ENCODE measurements at regions of chr2 and their contacts with region 1.

Region 1: DNA sequence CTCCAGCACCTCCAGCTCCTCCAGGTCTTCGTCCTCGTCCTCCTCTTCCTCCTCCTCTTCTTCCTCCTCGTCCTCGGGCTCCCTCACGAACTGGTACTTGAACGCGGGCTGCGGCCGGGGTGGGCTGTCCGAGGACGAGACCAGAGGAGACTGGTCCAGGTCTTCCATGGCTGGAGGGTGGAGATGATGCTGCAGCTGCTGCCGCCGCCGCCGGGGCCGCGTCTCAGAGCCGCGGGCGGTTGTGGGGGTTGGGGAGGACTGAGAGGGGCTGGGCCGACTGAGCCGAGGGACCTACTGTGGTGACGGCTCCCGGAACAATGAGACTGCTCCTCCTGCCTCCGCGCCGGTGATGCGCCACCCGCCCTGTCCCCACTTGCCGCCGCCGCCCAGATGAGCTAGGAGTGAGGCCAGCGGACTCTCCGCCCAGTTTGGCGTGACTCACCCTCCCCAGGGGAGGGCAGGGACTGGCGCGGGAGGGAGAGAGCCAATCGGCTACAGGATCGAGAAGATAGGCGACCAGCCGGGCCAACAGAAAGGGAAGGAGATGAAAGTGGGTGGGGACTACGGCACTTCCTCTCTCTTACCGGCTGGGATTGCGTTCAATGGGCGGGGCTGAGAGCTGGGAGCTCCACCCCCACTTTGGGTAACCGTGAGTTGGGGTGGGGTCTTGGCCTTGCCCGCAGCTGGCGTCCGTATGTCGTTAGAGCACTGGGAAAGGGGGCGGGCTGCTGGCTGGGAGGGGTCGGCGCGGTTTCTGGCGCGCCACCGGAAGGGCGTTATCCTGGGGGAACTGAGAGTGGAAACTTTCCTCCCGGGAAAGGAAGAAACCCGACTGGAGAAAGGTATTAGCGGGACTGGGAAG is at the start of gene RTN4:
- DNase-seq: peak; percentile 98 to 99 (median 99)
- H3K4me3 ChIP-seq: peak within 1 kb of the TSS; percentile 88 to 93
- H3K4me3 Mint-ChIP-seq: peak within 1 kb of the TSS; percentile 94 to 100 (median 100)
- H3K27ac ChIP-seq: peak within 1 kb of the TSS; percentile 87
- H3K27ac Mint-ChIP-seq: peak within 1 kb of the TSS; percentile 93 to 100 (median 99)
- H3K4me1 ChIP-seq: peaks cover 70% of the 10 kb centered on the region
- H3K4me1 Mint-ChIP-seq: peaks cover 51 to 82% (median 60%) of the 10 kb centered on the region in 4 donors
- H3K27me3 ChIP-seq: no peaks in the 10 kb centered on the region
- H3K27me3 Mint-ChIP-seq: no peaks in the 10 kb centered on the region
- total RNA-seq, gene RTN4: 73.8 to 81.3 TPM

Region 2: DNA sequence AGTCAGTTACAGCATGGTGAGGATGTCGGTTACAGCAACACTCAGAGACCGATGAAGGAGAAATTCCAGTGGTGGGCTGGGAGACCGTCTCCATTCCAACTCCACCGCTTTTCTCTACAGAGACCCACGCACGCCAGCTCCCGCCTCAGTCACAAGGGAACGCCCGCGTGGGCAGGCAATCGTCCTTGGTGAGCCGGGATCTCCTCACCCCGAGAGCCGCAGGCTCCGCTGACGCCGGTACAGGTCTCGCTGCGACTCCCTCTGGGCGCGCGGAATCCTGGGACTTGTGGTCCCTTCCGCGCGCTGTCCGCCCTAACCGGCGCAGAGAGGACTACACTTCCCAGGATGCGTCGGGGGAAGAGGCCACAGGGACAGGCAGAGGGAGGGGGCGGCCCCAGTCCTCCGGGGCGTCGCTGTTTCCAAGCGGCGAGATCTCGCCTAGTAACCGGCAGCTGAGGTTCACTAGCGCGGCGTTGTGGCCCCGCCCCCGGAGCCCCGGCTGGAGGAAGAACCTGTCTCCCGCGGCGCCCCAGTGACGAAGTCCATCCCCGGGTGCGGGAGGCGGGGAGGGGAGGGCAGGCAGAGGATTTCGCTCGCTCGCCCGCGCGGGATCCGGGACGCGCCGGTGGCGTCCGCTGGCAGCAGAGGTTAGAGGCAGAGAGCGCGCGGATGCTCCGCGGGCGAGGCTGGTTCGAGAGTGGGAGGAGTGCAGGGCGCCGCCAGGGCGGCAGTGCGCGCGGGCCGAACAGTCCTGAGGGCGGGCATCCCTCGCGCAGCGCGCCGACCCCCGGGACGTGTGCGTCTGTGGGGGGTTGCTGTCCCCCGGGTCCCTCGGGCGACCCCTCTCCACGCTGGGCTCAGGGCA is 327.0 kb before region 1 on chr2 and contains the start of gene EML6:
- CTCF ChIA-PET with region 1: no interaction called
- POLR2A ChIA-PET with region 1: no interaction called
- intact Hi-C with region 1: loop called (anchors 1 kb)
- DNase-seq: peak; percentile 98 to 100 (median 98)
- H3K4me3 ChIP-seq: peak within 1 kb of the TSS; percentile 61 to 79
- H3K4me3 Mint-ChIP-seq: peak within 1 kb of the TSS; percentile 93 to 97 (median 94)
- H3K27ac ChIP-seq: peak within 1 kb of the TSS; percentile 53
- H3K27ac Mint-ChIP-seq: peak within 1 kb of the TSS; percentile 57 to 94 (median 92)
- H3K4me1 ChIP-seq: peaks cover 18% of the 10 kb centered on the region
- H3K4me1 Mint-ChIP-seq: peaks cover 8 to 29% (median 16%) of the 10 kb centered on the region in 4 donors
- H3K27me3 ChIP-seq: peaks cover 15% of the 10 kb centered on the region
- H3K27me3 Mint-ChIP-seq: peaks cover 16 to 25% of the 10 kb centered on the region in 2 donors
- total RNA-seq, gene EML6: 1.8 to 3.9 TPM

Region 3: GRCh38 chr2:54859997-54860686 is 190.2 kb before region 1 on chr2:
- CTCF ChIA-PET with region 1: no interaction called
- POLR2A ChIA-PET with region 1: no interaction called
- intact Hi-C with region 1: no loop called
- DNase-seq: no peak
- H3K4me3 ChIP-seq: no peak overlapping the region
- H3K4me3 Mint-ChIP-seq: no peak overlapping the region
- H3K27ac ChIP-seq: no peak overlapping the region
- H3K27ac Mint-ChIP-seq: no peak overlapping the region
- H3K4me1 ChIP-seq: no peaks in the 10 kb centered on the region
- H3K4me1 Mint-ChIP-seq: no peaks in the 10 kb centered on the region
- H3K27me3 ChIP-seq: no peaks in the 10 kb centered on the region
- H3K27me3 Mint-ChIP-seq: no peaks in the 10 kb centered on the region

Region 4: GRCh38 chr2:55014962-55015939 is 35.1 kb before region 1 on chr2:
- CTCF ChIA-PET with region 1: interaction called, 14 read pairs
- POLR2A ChIA-PET with region 1: interaction called, 42 read pairs
- intact Hi-C with region 1: loop called (anchors 1 kb)
- DNase-seq: peak; percentile 37 to 51 (median 44)
- H3K4me3 ChIP-seq: no peak overlapping the region
- H3K4me3 Mint-ChIP-seq: no peak overlapping the region
- H3K27ac ChIP-seq: no peak overlapping the region
- H3K27ac Mint-ChIP-seq: peak overlapping the region in 4 of 7 donors; percentile 45 to 81 (median 70)
- H3K4me1 ChIP-seq: peaks cover 34% of the 10 kb centered on the region
- H3K4me1 Mint-ChIP-seq: peaks cover 27 to 64% (median 48%) of the 10 kb centered on the region in 4 donors
- H3K27me3 ChIP-seq: no peaks in the 10 kb centered on the region
- H3K27me3 Mint-ChIP-seq: no peaks in the 10 kb centered on the region

Region 5: GRCh38 chr2:55038428-55038827 is 11.9 kb before region 1 on chr2:
- CTCF ChIA-PET with region 1: interaction called, 8 read pairs
- POLR2A ChIA-PET with region 1: interaction called, 15 read pairs
- intact Hi-C with region 1: loop called (anchors 1 kb)
- DNase-seq: no peak
- H3K4me3 ChIP-seq: no peak overlapping the region
- H3K4me3 Mint-ChIP-seq: peak overlapping the region in 1 of 8 donors; percentile 3
- H3K27ac ChIP-seq: no peak overlapping the region
- H3K27ac Mint-ChIP-seq: no peak overlapping the region
- H3K4me1 ChIP-seq: peaks cover 62% of the 10 kb centered on the region
- H3K4me1 Mint-ChIP-seq: peaks cover 39 to 73% (median 53%) of the 10 kb centered on the region in 4 donors
- H3K27me3 ChIP-seq: no peaks in the 10 kb centered on the region
- H3K27me3 Mint-ChIP-seq: no peaks in the 10 kb centered on the region

Region 6: DNA sequence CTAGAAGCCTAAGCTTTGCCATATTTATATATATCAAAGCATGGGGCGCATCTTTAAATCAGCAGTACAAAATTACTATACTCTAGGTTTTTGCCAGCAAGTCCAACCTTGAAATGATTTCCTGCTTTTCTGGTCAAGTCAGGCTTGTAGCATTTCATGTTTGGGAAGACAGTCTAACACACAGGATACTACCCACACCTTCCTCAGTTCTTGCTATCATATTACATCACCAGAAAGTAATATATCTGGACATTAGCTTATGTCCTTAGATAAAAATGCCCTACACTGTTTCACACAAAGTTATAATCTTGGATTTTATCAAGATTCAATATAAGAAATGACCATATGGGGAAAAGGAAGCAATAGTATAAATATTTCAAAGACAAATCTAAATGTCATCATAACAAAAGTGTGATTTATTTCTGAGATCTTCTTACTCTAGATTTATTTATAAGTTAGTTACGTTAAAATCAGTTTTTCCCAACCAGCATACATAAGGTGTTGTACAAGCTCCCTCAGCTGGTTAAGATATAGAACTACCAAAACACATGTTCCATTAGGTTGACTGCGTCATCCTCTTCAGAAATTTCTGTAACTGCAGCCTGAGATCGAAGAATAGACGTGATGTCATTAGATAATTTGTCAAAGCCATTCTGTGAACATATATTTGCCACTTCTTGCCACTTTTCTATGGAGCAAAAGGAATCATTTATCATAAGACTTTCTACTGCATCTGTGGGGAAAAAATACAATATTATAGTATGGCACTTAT is 125.1 kb after region 1 on chr2:
- CTCF ChIA-PET with region 1: interaction called, 22 read pairs
- POLR2A ChIA-PET with region 1: interaction called, 3 read pairs
- intact Hi-C with region 1: no loop called
- DNase-seq: peak in 4 of 5 donors; percentile 46 to 64 (median 52)
- H3K4me3 ChIP-seq: no peak overlapping the region
- H3K4me3 Mint-ChIP-seq: peak overlapping the region in 2 of 8 donors; percentile 1 to 27
- H3K27ac ChIP-seq: no peak overlapping the region
- H3K27ac Mint-ChIP-seq: peak overlapping the region in 1 of 7 donors; percentile 44
- H3K4me1 ChIP-seq: no peaks in the 10 kb centered on the region
- H3K4me1 Mint-ChIP-seq: peaks cover 0 to 6% (median 3%) of the 10 kb centered on the region in 4 donors
- H3K27me3 ChIP-seq: no peaks in the 10 kb centered on the region
- H3K27me3 Mint-ChIP-seq: no peaks in the 10 kb centered on the region

Region 7: GRCh38 chr2:55282110-55282917 is 231.9 kb after region 1 on chr2:
- CTCF ChIA-PET with region 1: no interaction called
- POLR2A ChIA-PET with region 1: no interaction called
- intact Hi-C with region 1: loop called (anchors 1 kb)
- DNase-seq: peak; percentile 86 to 87 (median 86)
- H3K4me3 ChIP-seq: peak overlapping the region; percentile 26 to 90
- H3K4me3 Mint-ChIP-seq: peak overlapping the region; percentile 92 to 96 (median 94)
- H3K27ac ChIP-seq: peak overlapping the region; percentile 62
- H3K27ac Mint-ChIP-seq: peak overlapping the region; percentile 93 to 99 (median 98)
- H3K4me1 ChIP-seq: peaks cover 18% of the 10 kb centered on the region
- H3K4me1 Mint-ChIP-seq: peaks cover 13 to 38% (median 26%) of the 10 kb centered on the region in 4 donors
- H3K27me3 ChIP-seq: no peaks in the 10 kb centered on the region
- H3K27me3 Mint-ChIP-seq: no peaks in the 10 kb centered on the region

Region 8: DNA sequence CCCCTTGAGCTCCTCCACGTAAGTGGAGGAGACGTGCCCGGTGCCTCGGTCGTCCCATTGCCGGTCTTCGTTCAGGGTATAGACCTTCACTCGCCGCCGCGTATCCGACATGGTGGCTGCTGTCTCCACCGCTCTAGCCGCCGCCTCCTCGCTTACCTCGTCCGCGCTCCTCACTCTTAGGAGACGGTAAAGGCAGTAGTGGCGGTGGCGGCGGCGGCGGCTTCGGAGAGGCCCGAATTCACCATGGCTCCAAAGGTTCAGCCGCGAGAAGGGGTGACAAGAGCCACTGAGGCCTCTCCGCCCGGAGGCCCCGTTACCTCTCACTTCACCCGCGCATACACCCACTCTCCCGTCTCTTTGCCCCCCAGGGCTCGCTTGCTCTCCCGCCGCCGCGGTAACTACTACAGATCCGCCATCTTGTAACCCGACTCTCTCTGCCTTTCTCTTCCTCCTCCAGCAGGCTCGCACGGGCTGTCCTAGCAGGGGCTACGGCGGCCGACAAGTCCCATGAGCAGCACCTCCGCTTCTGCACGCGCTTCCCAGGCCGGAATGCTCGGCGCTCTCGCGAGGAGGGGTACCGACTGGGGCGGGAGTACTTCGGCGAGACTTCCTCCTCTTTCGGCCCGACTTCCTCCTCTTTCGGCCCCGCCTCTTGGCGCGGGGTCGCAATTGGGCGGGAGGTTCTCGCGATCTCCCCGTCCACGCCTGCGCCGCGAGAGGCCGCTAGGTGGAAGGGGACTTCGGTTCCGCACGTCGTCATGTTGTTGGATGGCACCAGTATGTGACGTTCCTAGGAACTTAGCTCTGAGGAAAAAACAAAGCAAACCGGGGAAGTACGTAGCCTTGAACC is 567.0 kb after region 1 on chr2 and contains the start of gene PPP4R3B:
- CTCF ChIA-PET with region 1: interaction called, 3 read pairs
- POLR2A ChIA-PET with region 1: interaction called, 12 read pairs
- intact Hi-C with region 1: loop called (anchors 1 kb)
- DNase-seq: peak; percentile 99 to 100 (median 100)
- H3K4me3 ChIP-seq: peak within 1 kb of the TSS; percentile 97 to 98
- H3K4me3 Mint-ChIP-seq: no peak within 1 kb of the TSS
- H3K27ac ChIP-seq: peak within 1 kb of the TSS; percentile 100
- H3K27ac Mint-ChIP-seq: no peak within 1 kb of the TSS
- H3K4me1 ChIP-seq: peaks cover 64% of the 10 kb centered on the region
- H3K4me1 Mint-ChIP-seq: peaks cover 23 to 44% (median 40%) of the 10 kb centered on the region in 4 donors
- H3K27me3 ChIP-seq: no peaks in the 10 kb centered on the region
- H3K27me3 Mint-ChIP-seq: no peaks in the 10 kb centered on the region
- total RNA-seq, gene PPP4R3B: 111 to 114 TPM